AG04450 (cell line): ENCODE measurements at regions of chr15 and their contacts with region 1.

Region 1: DNA sequence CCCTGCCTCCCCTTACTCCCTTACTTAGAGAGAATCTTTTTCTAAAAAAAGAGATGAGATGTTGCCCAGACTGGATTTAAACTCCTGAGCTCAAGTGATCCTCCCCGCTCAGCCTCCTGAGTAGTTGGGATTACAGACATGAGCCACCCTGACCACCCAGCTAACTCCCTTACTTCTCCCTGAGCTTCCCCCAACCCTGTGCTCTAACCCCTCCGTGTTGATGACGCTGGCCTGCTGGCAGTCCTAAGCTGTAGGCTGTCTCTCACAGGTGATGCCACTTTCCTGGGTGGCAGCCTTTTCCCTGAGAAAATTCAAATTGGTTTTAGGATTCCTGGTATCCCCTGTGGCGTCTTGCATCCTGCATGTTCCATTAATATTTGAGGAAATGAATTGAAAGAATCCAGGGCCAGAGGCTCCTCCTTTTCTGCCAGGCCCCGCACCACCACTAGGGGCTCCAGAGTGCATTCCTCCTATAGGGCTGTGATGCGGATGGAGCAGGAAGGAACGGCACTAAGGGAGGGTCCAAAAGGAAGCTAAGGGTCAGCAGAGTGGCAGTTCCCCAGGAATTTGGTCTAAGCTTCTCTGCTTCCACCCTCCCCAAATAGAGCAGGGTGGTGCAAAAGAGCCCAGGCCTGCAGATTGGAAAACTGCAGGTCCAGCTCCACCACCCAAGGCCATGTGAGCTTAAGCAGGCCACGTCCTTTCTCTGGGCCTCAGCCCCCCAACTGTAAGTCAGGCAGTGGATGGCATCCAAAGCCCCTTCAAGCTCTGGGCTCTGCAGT is 101.1 kb downstream of the DAPK2 start:
- DNase-seq: no peak
- H3K4me3 ChIP-seq: no peak overlapping the region
- H3K27ac ChIP-seq: no peak overlapping the region
- H3K27me3 ChIP-seq: peaks cover 2% of the 10 kb centered on the region
- CTCF ChIP-seq: peak; percentile 94

Region 2: DNA sequence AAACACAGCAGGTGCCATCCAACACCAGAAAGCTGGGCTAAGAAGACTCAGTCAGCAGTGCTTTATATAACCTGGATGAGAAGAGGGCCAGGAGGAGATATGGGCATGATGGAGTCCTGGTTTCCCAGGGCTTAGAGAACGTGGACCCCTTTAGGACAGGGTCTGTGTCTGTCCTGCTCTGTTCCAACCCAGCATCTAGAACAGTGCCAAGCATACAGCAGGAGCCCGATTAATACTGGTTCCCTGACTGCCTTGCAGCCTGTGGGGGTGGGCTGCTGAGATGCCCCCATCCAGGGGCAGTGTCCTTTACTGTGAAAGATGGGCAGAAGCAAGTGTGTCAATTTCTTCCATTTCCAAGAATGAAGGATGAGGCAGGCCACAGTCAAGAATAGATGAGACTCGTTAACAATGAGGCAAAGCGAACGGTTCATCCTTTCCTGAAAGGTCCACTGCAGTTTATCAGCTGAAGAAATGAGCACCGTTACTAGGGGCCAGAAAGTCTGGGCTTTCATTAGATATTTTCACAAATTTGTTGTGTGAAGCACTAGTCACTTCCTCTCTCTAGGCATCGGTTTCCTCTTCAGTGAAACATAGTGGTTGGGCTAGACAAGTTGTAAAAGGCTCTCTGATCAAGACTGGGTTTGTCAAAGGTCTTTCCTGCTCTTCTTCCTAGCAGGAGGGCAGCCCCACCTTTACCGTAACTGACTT is 39.5 kb before region 1 on chr15:
- CTCF ChIA-PET with region 1: interaction called, 10 read pairs
- POLR2A ChIA-PET with region 1: interaction called, 4 read pairs
- DNase-seq: no peak
- H3K4me3 ChIP-seq: no peak overlapping the region
- H3K27ac ChIP-seq: no peak overlapping the region
- H3K27me3 ChIP-seq: no peaks in the 10 kb centered on the region
- CTCF ChIP-seq: no peak

Region 3: GRCh38 chr15:63933522-63933921 is 11.7 kb before region 1 on chr15:
- CTCF ChIA-PET with region 1: interaction called, 30 read pairs
- POLR2A ChIA-PET with region 1: no interaction called
- DNase-seq: no peak
- H3K4me3 ChIP-seq: no peak overlapping the region
- H3K27ac ChIP-seq: no peak overlapping the region
- H3K27me3 ChIP-seq: peaks cover 5% of the 10 kb centered on the region
- CTCF ChIP-seq: no peak